WTC11 (cell line): ENCODE measurements at regions of chr3 and their contacts with region 1.

Region 1: DNA sequence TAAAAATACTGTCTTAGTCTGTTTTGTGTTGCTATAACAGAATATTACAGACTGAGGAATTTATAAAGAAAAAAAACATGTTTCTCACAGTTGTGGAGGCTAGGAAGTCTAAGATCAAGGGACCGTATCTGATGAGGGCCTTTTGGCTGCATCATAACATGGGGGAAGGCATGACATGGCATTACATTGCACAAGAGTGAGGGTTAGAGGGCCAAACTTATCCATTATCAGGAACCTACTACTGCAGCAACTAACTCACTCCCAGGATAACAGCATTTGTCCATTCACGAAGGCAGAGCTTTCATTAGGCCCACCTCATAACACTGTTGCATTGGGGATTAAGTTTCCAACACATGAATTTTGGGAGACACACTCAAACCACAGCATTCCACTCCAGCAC is 30.3 kb downstream of the SYN2 start:
- DNase-seq: no peak
- ATAC-seq: no peak
- H3K4me3 Mint-ChIP-seq: no peak overlapping the region
- H3K27ac Mint-ChIP-seq: no peak overlapping the region
- H3K4me1 Mint-ChIP-seq: no peaks in the 10 kb centered on the region
- H3K27me3 Mint-ChIP-seq: no peaks in the 10 kb centered on the region
- CTCF ChIP-seq: no peak

Region 2: DNA sequence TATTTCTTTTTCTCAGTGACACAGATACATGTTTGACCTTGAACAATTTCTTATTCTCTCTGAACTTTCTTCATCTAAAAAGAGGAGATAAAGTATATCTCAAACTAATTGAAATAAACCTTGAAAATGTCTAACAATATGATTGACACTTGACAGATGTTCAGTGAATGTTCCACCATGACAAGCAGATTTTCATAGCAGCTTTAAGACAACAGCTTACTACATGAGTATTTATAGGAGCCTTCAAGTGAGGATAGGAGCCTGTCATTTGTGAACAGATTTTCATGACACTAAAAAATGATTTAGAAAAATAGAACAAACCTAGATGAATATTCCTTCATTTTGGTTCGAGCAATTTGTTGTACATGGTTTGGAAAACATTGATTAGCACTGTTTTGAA is 16.9 kb before region 1 on chr3:
- CTCF ChIA-PET with region 1: no interaction called
- POLR2A ChIA-PET with region 1: no interaction called
- DNase-seq: no peak
- ATAC-seq: no peak
- H3K4me3 Mint-ChIP-seq: no peak overlapping the region
- H3K27ac Mint-ChIP-seq: no peak overlapping the region
- H3K4me1 Mint-ChIP-seq: no peaks in the 10 kb centered on the region
- H3K27me3 Mint-ChIP-seq: no peaks in the 10 kb centered on the region
- CTCF ChIP-seq: no peak

Region 3: GRCh38 chr3:12046406-12046805 is 12.0 kb after region 1 on chr3:
- CTCF ChIA-PET with region 1: interaction called, 11 read pairs
- POLR2A ChIA-PET with region 1: no interaction called
- DNase-seq: no peak
- ATAC-seq: peak; percentile 26; the same call in 1 of the 2 replicates
- H3K4me3 Mint-ChIP-seq: no peak overlapping the region
- H3K27ac Mint-ChIP-seq: no peak overlapping the region
- H3K4me1 Mint-ChIP-seq: peaks cover under 1% of the 10 kb centered on the region; the same call in 1 of the 2 replicates
- H3K27me3 Mint-ChIP-seq: no peaks in the 10 kb centered on the region
- CTCF ChIP-seq: no peak